Activated CD4-positive, alpha-beta memory T cell treated with anti-CD3 and anti-CD28 coated beads for 36 hours (primary cell): ENCODE measurements at regions of chr1 and their contacts with region 1.

Region 1: DNA sequence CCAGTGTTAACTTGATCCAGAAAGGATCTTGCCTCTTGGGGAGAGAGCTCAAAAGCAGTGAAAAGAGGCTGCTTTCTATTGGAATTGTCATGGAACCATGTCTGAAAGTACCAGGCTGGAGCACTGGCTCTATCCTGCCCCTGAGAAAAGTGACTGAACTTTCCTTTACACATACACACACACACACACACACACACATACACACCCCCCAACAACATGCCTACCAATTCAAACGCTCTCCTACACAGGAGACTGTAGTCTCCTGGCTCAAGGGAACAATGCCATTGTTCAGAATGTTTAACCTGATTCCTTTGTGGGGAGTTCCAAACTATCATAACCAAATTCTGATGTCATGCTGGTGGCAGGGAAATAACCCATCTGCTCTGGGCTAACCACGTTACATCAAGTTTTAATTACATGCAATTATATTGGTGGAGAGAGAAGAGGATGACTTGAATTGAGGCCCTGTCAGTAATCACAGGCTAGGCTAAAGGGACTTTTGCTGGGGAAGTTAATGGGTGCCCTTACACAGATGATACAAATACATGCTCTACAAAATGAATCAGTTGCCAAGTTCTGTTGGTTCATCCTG is 52.3 kb upstream of the DUSP10 start:
- DNase-seq: peak; percentile 56
- H3K4me3 Mint-ChIP-seq: no peak overlapping the region
- H3K27ac Mint-ChIP-seq: peak overlapping the region; percentile 84
- H3K4me1 Mint-ChIP-seq: peaks cover 41% of the 10 kb centered on the region
- H3K27me3 Mint-ChIP-seq: no peaks in the 10 kb centered on the region

Region 2: GRCh38 chr1:221708987-221709386 is 85.2 kb before region 1 on chr1:
- CTCF ChIA-PET with region 1: no interaction called
- POLR2A ChIA-PET with region 1: interaction called, 5 read pairs
- intact Hi-C with region 1: loop called (anchors 1 kb)
- DNase-seq: peak; percentile 63
- H3K4me3 Mint-ChIP-seq: peak overlapping the region; percentile 26
- H3K27ac Mint-ChIP-seq: peak overlapping the region; percentile 86
- H3K4me1 Mint-ChIP-seq: peaks cover 60% of the 10 kb centered on the region
- H3K27me3 Mint-ChIP-seq: no peaks in the 10 kb centered on the region

Region 3: GRCh38 chr1:221777431-221778072 is 16.6 kb before region 1 on chr1:
- CTCF ChIA-PET with region 1: interaction called, 6 read pairs
- POLR2A ChIA-PET with region 1: interaction called, 12 read pairs
- intact Hi-C with region 1: loop called (anchors 1 kb)
- DNase-seq: peak; percentile 73
- H3K4me3 Mint-ChIP-seq: peak overlapping the region; percentile 38
- H3K27ac Mint-ChIP-seq: peak overlapping the region; percentile 79
- H3K4me1 Mint-ChIP-seq: peaks cover 71% of the 10 kb centered on the region
- H3K27me3 Mint-ChIP-seq: no peaks in the 10 kb centered on the region

Region 4: GRCh38 chr1:221809031-221810029 is 15.2 kb after region 1 on chr1:
- CTCF ChIA-PET with region 1: interaction called, 3 read pairs
- POLR2A ChIA-PET with region 1: interaction called, 3 read pairs
- intact Hi-C with region 1: loop called (anchors 1 kb)
- DNase-seq: no peak
- H3K4me3 Mint-ChIP-seq: no peak overlapping the region
- H3K27ac Mint-ChIP-seq: no peak overlapping the region
- H3K4me1 Mint-ChIP-seq: peaks cover 35% of the 10 kb centered on the region
- H3K27me3 Mint-ChIP-seq: no peaks in the 10 kb centered on the region

Region 5: DNA sequence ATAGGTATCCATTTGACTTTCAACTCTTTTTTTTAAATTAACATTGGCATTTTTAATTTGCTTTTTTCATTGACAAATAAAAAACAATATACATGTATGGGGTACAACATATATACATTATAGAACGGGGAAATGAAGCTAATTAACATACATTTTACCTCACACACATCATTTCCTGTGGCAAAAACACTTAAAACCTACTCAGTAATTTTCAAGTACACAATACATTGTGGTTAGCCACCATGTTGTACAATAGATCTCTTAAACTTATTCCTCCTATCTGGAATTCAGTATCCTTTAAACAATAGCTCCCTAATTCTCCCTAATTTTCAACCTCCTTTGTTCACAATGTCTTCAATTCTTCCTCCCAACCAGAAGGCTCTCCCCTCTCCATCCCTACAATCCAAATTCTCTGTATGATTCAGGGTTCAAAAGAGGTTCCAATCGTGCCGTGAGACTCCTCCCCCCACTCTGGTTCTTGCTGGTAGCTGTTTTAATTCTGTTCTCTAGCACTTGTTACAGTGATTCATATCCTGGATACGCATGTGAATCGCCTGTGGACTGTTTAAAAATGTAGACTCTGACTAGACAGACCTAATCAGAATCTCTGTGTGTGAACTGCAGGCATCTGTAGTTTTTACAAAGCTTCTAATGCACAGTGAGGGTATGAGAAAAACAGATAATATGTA is 35.3 kb after region 1 on chr1:
- CTCF ChIA-PET with region 1: interaction called, 4 read pairs
- POLR2A ChIA-PET with region 1: interaction called, 9 read pairs
- intact Hi-C with region 1: loop called (anchors 1 kb)
- DNase-seq: peak; percentile 83
- H3K4me3 Mint-ChIP-seq: peak overlapping the region; percentile 30
- H3K27ac Mint-ChIP-seq: peak overlapping the region; percentile 90
- H3K4me1 Mint-ChIP-seq: peaks cover 53% of the 10 kb centered on the region
- H3K27me3 Mint-ChIP-seq: no peaks in the 10 kb centered on the region

Region 6: DNA sequence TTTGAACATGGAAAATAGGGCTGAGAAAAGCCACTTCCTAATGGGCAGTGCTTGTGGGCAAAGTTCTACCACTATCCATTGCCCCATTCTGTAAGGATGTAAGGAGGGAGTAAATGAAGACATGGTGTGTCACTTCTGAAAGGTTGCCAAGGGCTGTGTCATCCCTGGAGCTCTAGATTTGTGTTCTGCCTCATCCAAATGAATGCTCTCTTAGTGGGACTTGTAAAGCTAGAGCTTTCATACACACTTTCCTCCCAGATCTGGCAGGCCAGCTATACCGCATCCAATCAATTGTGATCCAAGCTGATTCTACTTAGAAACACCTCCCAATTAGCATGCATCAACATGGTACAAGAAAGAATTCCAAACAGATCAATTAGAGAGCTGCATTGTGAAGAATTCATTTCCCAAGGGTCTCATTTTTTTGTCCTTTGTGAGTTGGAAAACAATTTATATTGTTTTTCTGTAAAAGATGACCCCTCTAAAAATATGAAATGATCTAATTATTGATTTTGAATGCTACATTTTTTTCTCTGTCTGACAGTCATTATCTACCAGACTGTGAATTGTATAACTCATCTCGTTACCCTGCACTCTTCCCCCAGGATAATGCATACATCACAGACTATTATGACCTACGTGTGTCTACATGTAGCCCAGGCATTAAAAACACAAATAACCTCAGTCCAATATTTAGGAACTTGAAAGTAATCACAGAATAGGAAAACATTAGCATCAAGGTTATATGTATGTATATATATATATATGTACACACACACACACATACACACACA is 64.8 kb after region 1 on chr1:
- CTCF ChIA-PET with region 1: no interaction called
- POLR2A ChIA-PET with region 1: no interaction called
- intact Hi-C with region 1: loop called (anchors 1 kb)
- DNase-seq: peak; percentile 25
- H3K4me3 Mint-ChIP-seq: no peak overlapping the region
- H3K27ac Mint-ChIP-seq: no peak overlapping the region
- H3K4me1 Mint-ChIP-seq: peaks cover 14% of the 10 kb centered on the region
- H3K27me3 Mint-ChIP-seq: no peaks in the 10 kb centered on the region